Activated CD4-positive, alpha-beta T cell treated with anti-CD3 and anti-CD28 coated beads for 36 hours (primary cell): ENCODE measurements at regions of chr20 and their contacts with region 1.

Region 1: GRCh38 chr20:49245921-49246740 is 26.9 kb downstream of the DDX27 start:
- DNase-seq: peak; percentile 37
- ATAC-seq: peak; percentile 71
- H3K4me3 Mint-ChIP-seq: no peak overlapping the region
- H3K27ac Mint-ChIP-seq: peak overlapping the region; percentile 76
- H3K4me1 Mint-ChIP-seq: peaks cover 4% of the 10 kb centered on the region
- H3K27me3 Mint-ChIP-seq: no peaks in the 10 kb centered on the region

Region 2: DNA sequence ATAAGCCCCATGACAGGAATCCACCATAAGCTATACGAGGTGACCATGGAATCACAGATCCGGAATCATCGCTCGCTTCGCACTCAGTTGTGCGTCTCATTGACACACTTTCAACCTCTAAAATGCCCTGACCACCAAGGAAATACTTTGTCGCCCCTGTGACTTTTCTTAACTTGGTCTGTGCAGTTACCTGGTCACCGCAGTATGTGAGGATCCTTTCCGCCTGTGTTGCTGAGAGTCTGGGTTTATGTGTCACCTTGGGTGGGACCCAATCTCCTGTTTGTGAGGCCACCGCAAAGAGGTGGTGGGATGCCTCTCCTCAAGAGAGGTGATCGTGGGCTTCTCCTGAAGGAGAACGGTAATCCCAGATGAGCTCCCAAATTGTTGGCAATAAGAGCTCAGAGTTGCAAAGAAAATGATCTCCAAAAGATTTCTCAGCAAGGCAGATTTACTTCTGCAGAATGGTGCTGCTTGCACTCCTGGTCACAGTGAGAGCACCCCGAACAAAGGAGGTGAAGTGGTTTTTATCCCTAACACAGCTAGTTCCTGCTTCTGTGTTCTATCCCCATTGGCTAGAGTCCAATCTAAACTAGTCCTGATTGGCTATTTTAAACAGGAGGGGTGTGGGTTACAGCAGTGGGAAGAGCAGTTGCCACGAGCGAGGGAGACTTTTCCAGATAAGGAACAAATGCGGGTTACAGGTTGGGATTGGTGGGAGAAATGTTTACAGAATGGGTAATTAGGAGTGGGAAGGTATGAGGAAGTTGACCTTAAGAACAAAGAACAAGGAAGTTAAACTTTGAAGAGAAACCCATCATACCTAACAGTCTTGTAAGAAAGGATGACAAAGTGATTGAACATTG is 40.8 kb after region 1 on chr20:
- CTCF ChIA-PET with region 1: no interaction called
- POLR2A ChIA-PET with region 1: no interaction called
- intact Hi-C with region 1: no loop called
- DNase-seq: no peak
- ATAC-seq: peak; percentile 6
- H3K4me3 Mint-ChIP-seq: peak overlapping the region; percentile 37
- H3K27ac Mint-ChIP-seq: peak overlapping the region; percentile 79
- H3K4me1 Mint-ChIP-seq: peaks cover 61% of the 10 kb centered on the region
- H3K27me3 Mint-ChIP-seq: no peaks in the 10 kb centered on the region

Region 3: DNA sequence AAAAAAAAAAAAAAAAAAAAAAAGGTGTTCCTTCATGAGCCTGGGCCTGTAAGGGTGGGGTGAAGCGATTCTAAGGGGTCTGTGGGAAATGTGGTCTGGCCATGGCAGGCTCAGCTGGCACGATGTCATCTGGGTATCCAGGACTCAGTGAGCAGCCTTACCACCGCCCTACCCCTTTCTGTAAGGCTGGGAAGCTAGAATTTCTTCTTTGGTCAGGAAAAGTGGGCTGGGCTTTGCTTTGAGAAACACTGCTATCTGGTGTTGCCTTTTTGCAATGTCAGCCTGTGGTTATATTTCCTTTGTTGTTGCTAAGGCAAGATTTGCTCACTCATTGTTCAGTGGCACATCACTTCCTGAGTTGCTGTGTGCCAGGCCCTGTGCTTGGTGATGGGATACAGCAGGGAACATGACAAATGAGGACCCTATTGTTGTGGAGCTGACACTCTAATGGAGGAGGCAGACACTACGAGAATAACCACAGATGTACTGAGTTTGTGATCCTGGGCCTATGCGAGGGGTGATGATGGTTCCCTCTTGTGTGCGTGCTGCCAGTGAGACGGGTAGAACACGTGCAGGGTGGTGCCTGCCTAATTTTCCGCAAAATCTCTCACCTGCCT is 77.6 kb after region 1 on chr20:
- CTCF ChIA-PET with region 1: interaction called, 3 read pairs
- POLR2A ChIA-PET with region 1: no interaction called
- intact Hi-C with region 1: loop called in 1 of 2 experiments (anchors 1 kb)
- DNase-seq: peak; percentile 48
- ATAC-seq: peak; percentile 93
- H3K4me3 Mint-ChIP-seq: no peak overlapping the region
- H3K27ac Mint-ChIP-seq: peak overlapping the region; percentile 84
- H3K4me1 Mint-ChIP-seq: peaks cover 23% of the 10 kb centered on the region
- H3K27me3 Mint-ChIP-seq: peaks cover 24% of the 10 kb centered on the region